ENCODE measurements at regions of chr10 and their contacts with region 1.

Region 1: GRCh38 chr10:133520155-133520738 is 6.9 kb upstream of the CYP2E1 start:
- DNase-seq: peak; percentile 92

Region 2: DNA sequence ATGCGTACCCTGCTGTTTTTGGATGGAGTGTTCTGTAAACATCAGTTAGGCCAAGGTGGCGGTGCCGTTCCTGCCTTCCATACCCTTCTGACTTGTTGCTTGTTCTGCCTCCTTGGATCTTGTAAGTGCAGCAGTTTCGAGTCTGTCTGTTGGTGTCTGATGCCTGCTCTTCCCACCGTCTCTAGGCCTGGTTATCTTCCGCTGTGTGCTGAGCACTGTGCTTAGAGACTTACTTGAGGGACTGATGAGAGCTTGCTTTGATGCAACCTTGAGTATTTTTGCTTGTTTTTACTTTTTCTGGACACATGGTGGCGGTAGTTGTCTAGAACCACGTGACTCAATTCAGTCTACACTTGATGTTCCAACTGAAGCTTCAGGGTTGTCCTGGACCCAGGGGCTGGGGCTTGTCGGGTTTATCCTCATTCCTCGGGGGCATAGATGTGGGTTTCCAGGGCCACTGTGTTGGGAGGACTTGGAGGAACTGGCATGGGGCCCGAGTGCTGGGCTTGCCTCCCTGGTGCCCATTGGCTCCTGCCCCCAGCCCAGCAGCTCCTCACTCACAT is 81.5 kb before region 1 on chr10:
- intact Hi-C with region 1: loop called (anchors 5 kb)
- DNase-seq: peak; percentile 69